GM10248 (cell line): ENCODE measurements at regions of chr16 and their contacts with region 1.

Region 1: DNA sequence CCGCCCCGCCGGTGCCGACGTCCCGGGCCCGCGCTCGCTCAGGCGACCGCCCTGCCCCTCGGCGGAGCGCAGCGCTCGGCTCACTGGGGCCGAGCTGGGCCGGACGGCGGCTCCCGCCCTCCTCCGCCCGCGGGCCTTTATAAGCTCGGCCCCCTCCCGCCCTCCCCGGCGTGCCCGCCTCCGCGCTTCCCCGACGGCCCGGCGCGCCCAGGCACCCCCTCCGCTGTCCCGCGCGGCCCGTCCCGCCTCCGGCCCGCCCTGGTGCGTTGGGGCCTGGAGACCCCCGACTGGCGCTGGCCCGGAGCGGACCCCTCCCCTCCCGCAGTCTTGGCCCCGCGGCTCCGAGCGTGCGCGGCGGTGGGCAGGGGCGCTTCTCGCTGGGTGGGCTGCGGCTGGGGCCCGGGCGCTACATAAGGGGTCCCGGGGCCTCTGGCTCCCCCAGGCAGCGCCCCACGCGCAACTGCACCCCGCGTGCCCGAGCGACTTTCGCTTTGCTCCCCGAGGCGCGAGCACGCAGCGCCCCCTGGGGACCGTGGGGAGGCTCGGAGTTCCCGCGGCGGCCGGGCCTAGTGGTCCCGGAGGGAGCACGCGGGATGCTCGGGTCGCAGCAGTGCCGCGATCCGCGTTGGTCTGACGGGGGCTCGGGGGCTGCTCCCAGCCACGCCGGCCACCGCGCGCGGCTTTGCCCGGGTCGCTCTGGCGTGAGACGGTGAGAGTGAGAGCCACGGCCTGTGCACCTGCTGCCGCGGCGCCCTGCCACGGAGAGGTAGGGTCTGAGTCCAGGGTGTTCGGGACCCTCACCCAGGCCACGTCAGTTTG is at the start of gene PIEZO1:
- DNase-seq: peak; percentile 86
- CTCF ChIP-seq: peak; percentile 97

Region 2: GRCh38 chr16:88685156-88686061 is 99.9 kb before region 1 on chr16:
- CTCF ChIA-PET with region 1: no interaction called
- POLR2A ChIA-PET with region 1: no interaction called
- DNase-seq: peak; percentile 53
- CTCF ChIP-seq: peak; percentile 35

Region 3: DNA sequence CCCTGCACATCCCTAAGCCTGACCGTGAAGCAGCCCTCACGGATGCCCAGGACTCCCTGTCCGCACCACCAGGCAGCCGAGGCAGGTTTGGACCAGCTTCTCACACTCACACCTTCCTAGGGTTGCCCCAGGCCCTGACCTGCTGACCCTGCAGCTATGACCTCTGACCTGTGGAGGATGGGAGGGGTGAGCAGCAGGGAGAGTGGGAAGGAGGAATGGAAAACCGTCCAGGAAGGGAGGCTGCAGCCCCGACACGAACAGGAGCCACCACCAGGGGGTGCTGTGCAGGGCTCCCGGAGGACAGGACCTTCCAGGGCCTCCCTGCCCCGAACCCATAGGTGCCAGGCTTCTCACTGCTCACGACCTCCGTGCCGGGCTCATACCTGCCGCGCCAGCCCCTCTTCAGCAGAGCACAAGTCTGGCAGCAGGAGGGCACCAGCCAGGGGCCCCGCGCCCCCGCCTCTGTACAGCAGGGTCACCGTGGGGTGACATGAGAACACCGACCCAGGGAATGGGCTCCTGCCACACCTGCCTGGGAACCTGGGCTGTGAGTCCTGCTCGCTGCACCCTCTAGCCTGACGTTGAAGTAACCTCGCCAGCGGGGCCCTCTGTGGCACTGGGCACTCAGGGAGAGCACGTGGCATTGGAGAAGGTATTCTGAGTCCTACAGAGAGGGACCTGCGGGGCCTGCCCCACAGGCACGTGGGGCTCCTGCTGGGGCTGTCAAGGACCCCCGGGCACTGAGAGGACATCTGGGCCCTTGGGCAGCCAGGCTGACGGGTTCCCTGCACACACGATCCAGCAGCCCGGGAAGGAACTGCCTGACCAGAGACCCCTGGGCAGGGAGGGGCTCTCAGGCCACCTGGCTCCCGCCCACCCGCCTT is 41.4 kb before region 1 on chr16:
- CTCF ChIA-PET with region 1: interaction called, 80 read pairs
- POLR2A ChIA-PET with region 1: no interaction called
- DNase-seq: peak; percentile 82
- CTCF ChIP-seq: peak; percentile 76

Region 4: GRCh38 chr16:88754912-88755744 is 30.2 kb before region 1 on chr16:
- CTCF ChIA-PET with region 1: interaction called, 13 read pairs
- POLR2A ChIA-PET with region 1: no interaction called
- DNase-seq: no peak
- CTCF ChIP-seq: peak; percentile 32

Region 5: DNA sequence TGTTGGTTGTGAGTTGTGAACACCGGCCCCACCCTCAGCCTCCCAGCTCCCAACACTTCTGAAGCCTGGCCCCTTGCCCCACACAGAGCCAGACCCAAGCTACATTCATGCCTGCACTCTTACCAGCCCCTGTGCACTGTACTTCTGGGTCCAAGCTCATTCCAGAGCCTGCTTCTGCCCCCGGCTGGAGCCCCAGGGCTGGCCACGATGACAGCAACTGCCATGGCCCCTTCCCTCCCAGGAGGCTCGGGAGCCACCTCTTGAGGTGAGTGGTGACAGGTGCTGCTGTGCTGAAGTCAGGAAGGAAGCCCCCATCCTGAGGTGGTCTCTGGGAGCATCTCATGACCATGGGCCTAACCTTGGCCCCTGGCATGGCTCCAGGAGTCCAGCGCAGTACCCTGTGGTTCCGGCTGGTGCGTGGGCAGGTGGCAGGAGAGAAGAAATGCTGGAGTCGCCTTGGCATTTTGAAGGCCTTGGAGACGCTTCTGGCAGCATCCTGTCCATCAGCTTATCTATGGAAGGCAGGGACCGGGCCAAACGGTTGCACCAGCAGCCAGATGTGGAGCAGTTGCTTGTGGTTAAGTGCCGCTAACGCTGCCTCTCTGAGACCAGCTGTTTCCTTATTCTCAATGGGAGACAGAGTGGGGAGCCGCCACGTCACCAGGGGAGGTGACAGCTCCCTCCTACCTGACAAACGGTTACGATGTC is 14.4 kb after region 1 on chr16:
- CTCF ChIA-PET with region 1: interaction called, 19 read pairs
- POLR2A ChIA-PET with region 1: interaction called, 3 read pairs
- DNase-seq: no peak
- CTCF ChIP-seq: no peak

Region 6: DNA sequence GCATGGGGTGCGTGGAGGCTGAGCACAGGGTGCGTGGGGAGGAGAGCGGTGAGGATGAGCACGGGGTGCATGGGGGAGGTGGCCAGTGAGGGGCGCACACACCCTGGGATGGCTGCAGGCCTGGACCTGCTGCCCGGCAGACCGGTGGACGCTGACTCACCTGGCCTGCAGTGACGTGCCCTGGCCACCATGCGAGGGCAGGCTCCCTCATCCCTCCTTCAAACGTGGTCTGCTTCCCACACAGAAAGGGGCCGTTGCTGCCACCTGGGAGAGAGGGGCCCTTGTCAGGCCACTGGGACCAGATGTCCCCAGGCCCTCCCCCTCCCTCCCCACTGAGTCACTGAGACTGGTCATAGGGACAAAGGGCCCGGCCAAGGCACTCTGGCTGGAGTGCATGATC is 46.5 kb after region 1 on chr16:
- CTCF ChIA-PET with region 1: no interaction called
- POLR2A ChIA-PET with region 1: no interaction called
- DNase-seq: no peak
- CTCF ChIP-seq: no peak

Region 7: DNA sequence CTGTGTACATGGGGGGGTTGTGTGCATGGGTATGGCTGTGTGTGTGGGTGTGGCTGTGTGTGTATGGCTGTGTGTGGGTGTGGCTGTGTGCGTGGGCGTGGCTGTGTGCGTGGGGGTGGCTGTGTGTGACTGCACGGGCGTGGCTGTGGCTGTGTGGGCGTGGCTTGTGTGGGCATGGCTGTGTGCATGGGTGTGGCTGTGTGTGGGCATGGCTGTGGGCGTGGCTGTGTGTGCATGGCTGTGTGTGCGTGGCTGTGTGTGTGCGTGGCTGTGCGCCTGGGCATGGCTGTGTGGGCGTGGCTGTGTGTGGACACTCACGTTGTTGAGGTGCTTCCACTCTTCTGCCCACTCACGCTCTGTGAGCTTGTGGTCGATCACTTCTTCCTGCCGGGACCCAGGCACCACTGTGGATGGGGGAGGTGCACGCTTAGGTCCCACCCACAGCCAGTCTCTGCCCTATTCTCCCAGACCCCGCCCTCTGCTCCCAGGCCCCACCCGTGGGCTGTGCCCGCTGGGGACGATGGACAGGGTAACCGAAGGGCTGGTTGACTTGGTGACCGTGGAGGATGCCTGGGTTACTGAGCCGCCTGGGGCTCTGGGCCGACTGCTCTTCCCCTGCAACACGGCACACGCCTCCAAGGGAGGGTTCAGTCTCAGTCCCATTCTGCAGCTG is 97.2 kb after region 1 on chr16:
- CTCF ChIA-PET with region 1: no interaction called
- POLR2A ChIA-PET with region 1: no interaction called
- DNase-seq: no peak
- CTCF ChIP-seq: no peak